Prostate gland (tissue), 2 donors: ENCODE measurements at regions of chr17 and their contacts with region 1.

Region 1: DNA sequence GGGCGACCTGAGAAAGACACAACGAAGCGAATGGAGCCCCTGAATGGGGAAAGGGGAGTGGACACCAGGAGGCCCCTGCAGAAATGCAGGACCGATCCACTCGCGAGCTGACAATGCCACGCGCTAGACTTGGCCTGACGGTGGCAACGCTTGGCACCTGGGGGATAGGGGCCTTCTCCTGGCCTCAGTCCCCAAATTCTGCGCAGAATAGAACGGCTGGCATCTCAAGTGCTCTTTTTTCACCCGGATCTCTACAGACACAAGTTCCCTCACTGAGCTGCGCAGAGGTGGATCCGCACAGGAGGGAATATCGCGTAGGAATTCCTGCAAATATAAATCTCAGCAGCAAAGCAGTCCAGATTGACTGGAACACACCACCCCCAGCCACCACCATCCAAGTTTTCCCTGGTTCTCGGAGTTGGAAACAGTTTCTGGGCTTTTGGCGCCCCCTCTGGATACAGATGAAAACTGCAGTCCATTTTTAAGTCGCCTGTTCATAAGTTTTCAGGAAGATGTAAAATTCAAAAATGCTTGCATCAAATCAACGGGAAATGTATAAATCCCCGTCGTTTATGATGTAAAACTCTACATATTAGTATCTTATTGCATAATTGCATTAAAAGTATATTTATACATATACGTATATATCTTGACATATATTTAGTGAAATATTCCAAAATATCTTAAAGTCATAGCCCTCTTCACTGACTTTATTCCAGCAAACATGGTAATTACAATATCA is 2.3 kb upstream of the SOX9 start:
- DNase-seq: peak; percentile 74
- H3K4me3 ChIP-seq: peak overlapping the region in 1 of 2 donors; percentile 18
- H3K27ac ChIP-seq: no peak overlapping the region
- H3K4me1 ChIP-seq: peaks cover 3% of the 10 kb centered on the region
- H3K27me3 ChIP-seq: no peaks in the 10 kb centered on the region
- CTCF ChIP-seq: peak; percentile 75 to 85 (median 84)
- POLR2A ChIP-seq: no peak

Region 2: DNA sequence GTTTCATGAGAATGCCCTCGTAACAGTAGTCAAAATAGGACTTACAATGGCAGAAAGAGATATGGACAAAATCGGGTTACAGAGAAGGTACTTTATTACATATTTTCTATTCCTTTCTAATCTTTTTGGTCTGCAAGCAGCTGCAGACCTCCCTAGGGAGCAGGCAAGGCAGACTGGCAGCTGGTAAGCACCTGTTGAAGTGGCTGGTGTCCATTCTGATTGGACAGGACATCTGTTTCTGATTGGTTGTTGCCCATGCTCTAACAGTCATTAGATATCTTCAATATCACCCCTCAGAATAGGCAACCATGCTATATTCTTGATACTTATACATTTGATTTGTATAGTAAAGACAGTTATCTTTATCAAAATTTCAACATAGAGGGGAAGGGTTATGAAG is 1342.8 kb before region 1 on chr17:
- intact Hi-C with region 1: loop called (anchors 10 kb)
- DNase-seq: no peak
- H3K4me3 ChIP-seq: no peak overlapping the region
- H3K27ac ChIP-seq: no peak overlapping the region
- H3K4me1 ChIP-seq: no peaks in the 10 kb centered on the region
- H3K27me3 ChIP-seq: no peaks in the 10 kb centered on the region
- CTCF ChIP-seq: no peak
- POLR2A ChIP-seq: no peak